Naive thymus-derived CD4-positive, alpha-beta T cell (primary cell): ENCODE measurements at regions of chr1 and their contacts with region 1.

Region 1: GRCh38 chr1:27044613-27045151 is 32.0 kb upstream of the TENT5B start:
- DNase-seq: peak; percentile 69 to 92 (median 86)
- ATAC-seq: peak; percentile 95
- H3K4me3 ChIP-seq: peak overlapping the region; percentile 39
- H3K4me3 Mint-ChIP-seq: peak overlapping the region; percentile 39 to 85 (median 64)
- H3K27ac ChIP-seq: peak overlapping the region; percentile 58
- H3K27ac Mint-ChIP-seq: peak overlapping the region; percentile 1 to 86 (median 40)
- H3K4me1 ChIP-seq: peaks cover 0 to 15% of the 10 kb centered on the region in 2 donors
- H3K4me1 Mint-ChIP-seq: peaks cover 3 to 26% (median 19%) of the 10 kb centered on the region in 7 donors
- H3K27me3 ChIP-seq: no peaks in the 10 kb centered on the region
- H3K27me3 Mint-ChIP-seq: no peaks in the 10 kb centered on the region

Region 2: DNA sequence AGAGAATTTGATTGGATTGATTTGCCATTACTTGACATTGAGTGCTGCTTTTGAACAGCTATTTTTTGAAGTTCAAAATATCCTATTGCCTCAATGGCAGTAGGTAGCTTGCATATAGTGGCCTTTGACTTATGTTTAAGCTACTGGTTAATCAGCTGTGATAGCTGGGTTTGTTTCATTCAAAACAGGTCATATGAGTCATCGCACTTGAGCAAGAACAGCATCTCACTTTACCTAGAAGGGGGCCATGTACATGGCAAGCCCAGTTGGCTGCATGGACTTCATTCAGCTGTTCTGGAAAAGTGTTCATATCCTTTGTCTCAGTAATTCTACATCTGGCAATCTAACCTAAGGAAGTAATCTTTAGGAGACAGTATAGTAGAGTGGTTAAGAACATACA is 377.8 kb before region 1 on chr1:
- CTCF ChIA-PET with region 1: no interaction called
- POLR2A ChIA-PET with region 1: no interaction called
- intact Hi-C with region 1: no loop called
- DNase-seq: no peak
- ATAC-seq: no peak
- H3K4me3 ChIP-seq: no peak overlapping the region
- H3K4me3 Mint-ChIP-seq: no peak overlapping the region
- H3K27ac ChIP-seq: no peak overlapping the region
- H3K27ac Mint-ChIP-seq: no peak overlapping the region
- H3K4me1 ChIP-seq: no peaks in the 10 kb centered on the region
- H3K4me1 Mint-ChIP-seq: peaks cover 0 to 1% (median 0%) of the 10 kb centered on the region in 7 donors
- H3K27me3 ChIP-seq: no peaks in the 10 kb centered on the region
- H3K27me3 Mint-ChIP-seq: no peaks in the 10 kb centered on the region

Region 3: DNA sequence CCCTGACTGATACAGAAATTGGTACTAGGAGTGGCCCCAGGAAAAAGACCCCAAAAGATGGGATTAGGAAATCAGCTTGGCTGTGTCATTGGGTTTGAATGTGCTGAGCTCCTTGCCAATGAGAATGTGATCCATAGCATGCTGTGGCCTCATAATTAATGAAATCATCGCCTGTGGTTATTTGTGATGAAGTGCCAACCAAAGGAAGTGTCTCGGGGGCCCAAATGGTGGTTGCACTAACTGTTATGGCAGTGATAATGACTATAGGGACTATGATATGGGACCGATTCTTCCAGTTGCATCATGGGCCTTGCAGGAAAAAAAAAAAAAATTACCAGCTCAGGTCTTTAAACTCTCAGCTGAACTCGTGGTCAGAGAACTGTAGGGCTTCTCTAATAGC is 233.6 kb before region 1 on chr1:
- CTCF ChIA-PET with region 1: no interaction called
- POLR2A ChIA-PET with region 1: no interaction called
- intact Hi-C with region 1: no loop called
- DNase-seq: no peak
- ATAC-seq: no peak
- H3K4me3 ChIP-seq: no peak overlapping the region
- H3K4me3 Mint-ChIP-seq: peak overlapping the region in 1 of 10 donors; percentile 39
- H3K27ac ChIP-seq: no peak overlapping the region
- H3K27ac Mint-ChIP-seq: peak overlapping the region in 2 of 9 donors; percentile 32 to 92
- H3K4me1 ChIP-seq: peaks cover 0 to 14% of the 10 kb centered on the region in 2 donors
- H3K4me1 Mint-ChIP-seq: peaks cover 0 to 26% (median 8%) of the 10 kb centered on the region in 7 donors
- H3K27me3 ChIP-seq: no peaks in the 10 kb centered on the region
- H3K27me3 Mint-ChIP-seq: no peaks in the 10 kb centered on the region

Region 4: DNA sequence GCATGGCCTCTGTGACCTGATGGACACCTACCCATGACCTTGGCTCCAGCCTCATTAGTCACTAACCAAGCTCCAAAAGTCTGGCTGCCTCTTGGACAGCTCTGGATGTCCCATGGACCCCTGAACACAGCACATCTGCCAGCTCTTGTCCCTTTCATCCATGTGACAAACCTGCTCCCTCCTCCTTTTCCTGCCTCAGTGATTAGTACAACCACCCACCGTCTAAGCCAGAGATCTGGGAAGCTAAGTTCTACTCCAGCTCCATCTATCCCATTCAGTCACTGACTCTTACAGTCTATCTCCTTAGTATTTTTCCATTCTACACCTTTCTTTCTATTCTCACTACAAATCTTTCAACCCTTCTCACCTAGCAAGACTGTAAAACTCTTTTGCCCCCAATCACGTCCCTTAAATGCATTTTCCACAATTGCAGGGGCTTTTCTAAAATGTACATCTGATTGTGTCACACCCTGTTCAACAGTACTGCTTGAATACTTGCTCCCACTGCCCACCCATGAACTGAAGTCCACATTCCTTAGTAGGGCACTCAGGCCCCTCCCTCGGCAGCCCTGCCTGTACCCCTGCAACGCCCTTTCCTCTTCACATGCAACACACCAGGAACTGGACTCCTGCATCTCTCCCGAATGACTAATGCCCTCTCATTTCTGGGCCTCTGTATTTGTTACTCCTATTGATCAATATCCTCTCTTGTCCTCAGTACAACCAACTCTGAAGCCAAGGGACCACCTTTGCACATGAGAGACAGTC is 161.8 kb before region 1 on chr1:
- CTCF ChIA-PET with region 1: no interaction called
- POLR2A ChIA-PET with region 1: no interaction called
- intact Hi-C with region 1: no loop called
- DNase-seq: no peak
- ATAC-seq: no peak
- H3K4me3 ChIP-seq: no peak overlapping the region
- H3K4me3 Mint-ChIP-seq: no peak overlapping the region
- H3K27ac ChIP-seq: no peak overlapping the region
- H3K27ac Mint-ChIP-seq: peak overlapping the region in 4 of 9 donors; percentile 10 to 34 (median 13)
- H3K4me1 ChIP-seq: no peaks in the 10 kb centered on the region
- H3K4me1 Mint-ChIP-seq: peaks cover 6 to 17% (median 10%) of the 10 kb centered on the region in 7 donors
- H3K27me3 ChIP-seq: no peaks in the 10 kb centered on the region
- H3K27me3 Mint-ChIP-seq: no peaks in the 10 kb centered on the region

Region 5: DNA sequence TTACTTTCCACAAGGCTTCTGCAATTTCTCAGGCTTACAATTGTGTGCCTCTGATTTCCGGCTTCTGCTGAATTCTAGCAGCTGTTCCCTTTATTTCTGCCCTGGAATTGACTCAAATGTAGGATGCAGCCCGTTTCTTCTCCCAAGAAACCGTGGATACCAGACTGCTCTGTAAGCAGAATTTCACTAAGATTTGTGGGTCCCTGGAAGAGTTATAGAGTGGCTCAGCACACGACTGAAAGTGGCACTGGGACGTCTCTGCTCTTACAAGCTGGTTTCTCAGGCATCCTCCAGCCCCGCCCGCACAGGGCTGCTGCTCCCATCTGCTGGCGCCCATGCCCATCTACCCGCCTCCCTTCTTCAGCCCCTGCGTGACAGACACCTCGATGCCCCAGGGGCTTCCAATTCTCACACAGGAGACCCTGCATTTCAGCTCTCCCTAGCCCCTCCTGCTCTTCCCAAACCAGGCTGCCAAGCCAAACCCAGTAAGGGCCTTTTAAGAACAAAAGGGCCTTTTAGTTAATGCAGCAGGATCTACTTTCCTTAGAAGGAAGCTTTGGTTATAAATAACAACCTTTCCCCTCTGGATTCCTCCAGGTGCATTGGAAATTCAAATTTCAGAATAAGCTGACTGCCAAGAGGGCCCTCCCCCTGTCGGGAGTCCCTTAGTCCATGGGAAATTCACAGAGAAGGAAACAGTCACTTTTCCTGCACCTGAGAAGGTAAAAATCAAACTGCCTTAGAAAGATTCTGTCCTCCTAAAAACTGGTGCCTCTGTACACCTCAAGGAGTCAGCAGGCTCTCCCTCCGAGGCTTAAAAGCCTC is 13.3 kb after region 1 on chr1:
- CTCF ChIA-PET with region 1: interaction called, 31 read pairs
- POLR2A ChIA-PET with region 1: no interaction called
- intact Hi-C with region 1: no loop called
- DNase-seq: no peak
- ATAC-seq: no peak
- H3K4me3 ChIP-seq: no peak overlapping the region
- H3K4me3 Mint-ChIP-seq: no peak overlapping the region
- H3K27ac ChIP-seq: no peak overlapping the region
- H3K27ac Mint-ChIP-seq: peak overlapping the region in 1 of 9 donors; percentile 36
- H3K4me1 ChIP-seq: no peaks in the 10 kb centered on the region
- H3K4me1 Mint-ChIP-seq: no peaks in the 10 kb centered on the region
- H3K27me3 ChIP-seq: no peaks in the 10 kb centered on the region
- H3K27me3 Mint-ChIP-seq: peaks cover 0 to 2% (median 0%) of the 10 kb centered on the region in 5 donors

Region 6: GRCh38 chr1:27097484-27097917 is 52.8 kb after region 1 on chr1:
- CTCF ChIA-PET with region 1: interaction called, 163 read pairs
- POLR2A ChIA-PET with region 1: interaction called, 4 read pairs
- intact Hi-C with region 1: loop called in 1 of 2 experiments (anchors 1 kb)
- DNase-seq: peak; percentile 49 to 79 (median 63)
- ATAC-seq: peak; percentile 83
- H3K4me3 ChIP-seq: no peak overlapping the region
- H3K4me3 Mint-ChIP-seq: no peak overlapping the region
- H3K27ac ChIP-seq: no peak overlapping the region
- H3K27ac Mint-ChIP-seq: no peak overlapping the region
- H3K4me1 ChIP-seq: no peaks in the 10 kb centered on the region
- H3K4me1 Mint-ChIP-seq: peaks cover 0 to 18% (median under 1%) of the 10 kb centered on the region in 7 donors
- H3K27me3 ChIP-seq: no peaks in the 10 kb centered on the region
- H3K27me3 Mint-ChIP-seq: no peaks in the 10 kb centered on the region

Region 7: GRCh38 chr1:27284425-27285273 is 240.0 kb after region 1 on chr1:
- CTCF ChIA-PET with region 1: interaction called, 9 read pairs
- POLR2A ChIA-PET with region 1: no interaction called
- intact Hi-C with region 1: loop called (anchors 1 kb)
- DNase-seq: peak; percentile 70 to 88 (median 85)
- ATAC-seq: peak; percentile 96
- H3K4me3 ChIP-seq: no peak overlapping the region
- H3K4me3 Mint-ChIP-seq: no peak overlapping the region
- H3K27ac ChIP-seq: no peak overlapping the region
- H3K27ac Mint-ChIP-seq: peak overlapping the region in 5 of 9 donors; percentile 14 to 72 (median 57)
- H3K4me1 ChIP-seq: no peaks in the 10 kb centered on the region
- H3K4me1 Mint-ChIP-seq: peaks cover 0 to 12% (median 3%) of the 10 kb centered on the region in 7 donors
- H3K27me3 ChIP-seq: no peaks in the 10 kb centered on the region
- H3K27me3 Mint-ChIP-seq: no peaks in the 10 kb centered on the region